Activated CD4-positive, alpha-beta T cell treated with anti-CD3 and anti-CD28 coated beads for 36 hours (primary cell): ENCODE measurements at regions of chr17 and their contacts with region 1.

Region 1: DNA sequence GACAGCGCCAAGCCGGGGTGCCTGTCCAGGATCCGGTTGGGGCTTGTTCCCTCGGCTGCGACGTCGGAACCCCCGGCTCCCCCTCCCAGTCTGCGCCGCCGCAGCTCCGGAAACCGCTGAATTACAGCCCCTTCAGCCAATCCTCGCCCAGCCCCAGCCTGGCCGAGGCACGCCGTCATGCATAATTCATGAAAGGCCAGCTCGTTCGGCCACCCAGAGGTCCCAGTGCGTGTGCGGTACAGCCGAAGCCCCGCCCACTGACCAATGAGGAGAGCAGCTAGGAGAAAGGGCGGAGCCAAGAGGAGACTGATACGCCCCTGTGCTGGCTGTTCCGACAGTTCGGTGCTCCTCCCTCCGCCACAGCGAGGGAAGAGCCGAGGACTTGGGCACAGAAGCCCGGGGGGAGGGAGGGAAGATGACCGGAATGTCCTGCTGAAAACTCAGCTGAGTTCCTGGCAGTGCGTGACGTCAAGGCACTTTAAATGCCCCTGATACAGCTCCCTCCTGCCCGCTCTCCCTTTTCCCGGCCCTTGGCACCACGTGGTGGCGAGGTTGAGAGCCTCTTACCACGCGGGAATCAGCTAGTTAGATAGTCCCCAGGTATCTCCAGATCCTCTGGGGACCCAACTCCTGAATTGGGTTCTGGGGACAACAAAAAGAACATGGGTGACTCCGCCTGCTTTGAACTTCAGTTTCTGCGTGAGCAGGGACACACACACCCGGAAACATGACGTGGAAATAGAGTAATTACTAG is at the start of gene STAT3:
- DNase-seq: peak; percentile 100
- ATAC-seq: peak; percentile 88
- H3K4me3 Mint-ChIP-seq: peak within 1 kb of the TSS; percentile 95
- H3K27ac Mint-ChIP-seq: peak within 1 kb of the TSS; percentile 100
- H3K4me1 Mint-ChIP-seq: peaks cover 57% of the 10 kb centered on the region
- H3K27me3 Mint-ChIP-seq: no peaks in the 10 kb centered on the region
- total RNA-seq, gene STAT3: 332 to 345 TPM

Region 2: GRCh38 chr17:42153919-42154742 is 234.4 kb before region 1 on chr17:
- CTCF ChIA-PET with region 1: no interaction called
- POLR2A ChIA-PET with region 1: no interaction called
- intact Hi-C with region 1: loop called in 1 of 2 experiments (anchors 1 kb)
- DNase-seq: no peak
- ATAC-seq: no peak
- H3K4me3 Mint-ChIP-seq: peak overlapping the region; percentile 97
- H3K27ac Mint-ChIP-seq: peak overlapping the region; percentile 93
- H3K4me1 Mint-ChIP-seq: peaks cover 31% of the 10 kb centered on the region
- H3K27me3 Mint-ChIP-seq: no peaks in the 10 kb centered on the region

Region 3: GRCh38 chr17:42287926-42288802 is 100.4 kb before region 1 on chr17 and contains the start of gene STAT5A:
- CTCF ChIA-PET with region 1: interaction called, 4 read pairs
- POLR2A ChIA-PET with region 1: interaction called, 5 read pairs
- intact Hi-C with region 1: loop called in 1 of 2 experiments (anchors 1 kb)
- DNase-seq: peak; percentile 90
- ATAC-seq: peak; percentile 65
- H3K4me3 Mint-ChIP-seq: peak within 1 kb of the TSS; percentile 81
- H3K27ac Mint-ChIP-seq: peak within 1 kb of the TSS; percentile 96
- H3K4me1 Mint-ChIP-seq: peaks cover 63% of the 10 kb centered on the region
- H3K27me3 Mint-ChIP-seq: no peaks in the 10 kb centered on the region
- total RNA-seq, gene STAT5A: 178 to 203 TPM

Region 4: GRCh38 chr17:42337442-42337841 is 51.1 kb before region 1 on chr17:
- CTCF ChIA-PET with region 1: interaction called, 25 read pairs
- POLR2A ChIA-PET with region 1: interaction called, 38 read pairs
- intact Hi-C with region 1: loop called (anchors 1 kb)
- DNase-seq: peak; percentile 93
- ATAC-seq: peak; percentile 60
- H3K4me3 Mint-ChIP-seq: peak overlapping the region; percentile 53
- H3K27ac Mint-ChIP-seq: peak overlapping the region; percentile 94
- H3K4me1 Mint-ChIP-seq: peaks cover 86% of the 10 kb centered on the region
- H3K27me3 Mint-ChIP-seq: no peaks in the 10 kb centered on the region

Region 5: DNA sequence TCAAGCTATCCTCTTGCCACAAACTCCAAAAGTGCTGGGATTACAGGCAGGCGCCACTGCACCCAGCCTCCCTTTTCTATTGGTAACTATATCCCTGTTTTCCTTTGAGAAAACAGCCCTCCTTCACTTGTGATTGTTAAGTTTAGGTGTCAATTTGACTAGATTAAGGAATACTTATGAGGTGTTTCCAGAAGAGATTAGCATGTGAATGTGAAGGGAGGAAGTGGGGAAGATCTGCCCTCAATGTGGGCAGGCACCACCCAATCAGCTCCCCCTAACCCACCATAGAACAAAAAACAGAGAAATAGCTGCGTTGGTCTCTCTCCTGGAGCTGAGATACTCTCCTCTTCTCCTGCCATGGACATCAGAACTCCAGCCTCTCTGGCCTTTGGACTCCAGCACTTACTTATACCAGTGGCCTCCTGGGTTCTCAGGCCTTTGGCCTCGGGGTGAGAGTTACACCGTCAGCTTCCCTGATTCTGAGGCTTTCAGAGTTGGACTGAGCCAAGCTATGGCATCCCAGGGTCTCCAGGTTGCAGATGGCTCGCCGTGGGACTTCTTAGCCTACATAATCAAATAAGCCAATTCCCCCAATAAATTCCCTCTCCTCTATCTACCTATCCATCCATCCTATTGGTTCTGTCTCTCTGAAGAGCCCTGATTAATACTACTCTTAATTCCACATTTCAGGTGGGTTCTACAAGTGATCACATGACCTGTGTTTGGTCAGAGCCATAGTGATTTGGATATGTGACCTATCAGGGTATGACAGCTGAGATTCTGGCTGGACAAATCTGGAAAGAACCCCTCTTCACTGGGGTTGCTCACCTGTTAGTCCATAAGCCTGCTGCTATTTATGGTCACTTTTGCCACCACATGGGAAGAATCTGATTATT is 11.6 kb after region 1 on chr17:
- CTCF ChIA-PET with region 1: interaction called, 36 read pairs
- POLR2A ChIA-PET with region 1: interaction called, 9 read pairs
- intact Hi-C with region 1: no loop called
- DNase-seq: no peak
- ATAC-seq: no peak
- H3K4me3 Mint-ChIP-seq: no peak overlapping the region
- H3K27ac Mint-ChIP-seq: peak overlapping the region; percentile 2
- H3K4me1 Mint-ChIP-seq: peaks cover 16% of the 10 kb centered on the region
- H3K27me3 Mint-ChIP-seq: peaks cover 2% of the 10 kb centered on the region

Region 6: GRCh38 chr17:42677008-42677857 is 288.7 kb after region 1 on chr17:
- CTCF ChIA-PET with region 1: no interaction called
- POLR2A ChIA-PET with region 1: no interaction called
- intact Hi-C with region 1: loop called in 1 of 2 experiments (anchors 2 kb)
- DNase-seq: peak; percentile 100
- ATAC-seq: peak; percentile 84
- H3K4me3 Mint-ChIP-seq: peak overlapping the region; percentile 70
- H3K27ac Mint-ChIP-seq: peak overlapping the region; percentile 69
- H3K4me1 Mint-ChIP-seq: peaks cover 49% of the 10 kb centered on the region
- H3K27me3 Mint-ChIP-seq: peaks cover 29% of the 10 kb centered on the region

Region 7: DNA sequence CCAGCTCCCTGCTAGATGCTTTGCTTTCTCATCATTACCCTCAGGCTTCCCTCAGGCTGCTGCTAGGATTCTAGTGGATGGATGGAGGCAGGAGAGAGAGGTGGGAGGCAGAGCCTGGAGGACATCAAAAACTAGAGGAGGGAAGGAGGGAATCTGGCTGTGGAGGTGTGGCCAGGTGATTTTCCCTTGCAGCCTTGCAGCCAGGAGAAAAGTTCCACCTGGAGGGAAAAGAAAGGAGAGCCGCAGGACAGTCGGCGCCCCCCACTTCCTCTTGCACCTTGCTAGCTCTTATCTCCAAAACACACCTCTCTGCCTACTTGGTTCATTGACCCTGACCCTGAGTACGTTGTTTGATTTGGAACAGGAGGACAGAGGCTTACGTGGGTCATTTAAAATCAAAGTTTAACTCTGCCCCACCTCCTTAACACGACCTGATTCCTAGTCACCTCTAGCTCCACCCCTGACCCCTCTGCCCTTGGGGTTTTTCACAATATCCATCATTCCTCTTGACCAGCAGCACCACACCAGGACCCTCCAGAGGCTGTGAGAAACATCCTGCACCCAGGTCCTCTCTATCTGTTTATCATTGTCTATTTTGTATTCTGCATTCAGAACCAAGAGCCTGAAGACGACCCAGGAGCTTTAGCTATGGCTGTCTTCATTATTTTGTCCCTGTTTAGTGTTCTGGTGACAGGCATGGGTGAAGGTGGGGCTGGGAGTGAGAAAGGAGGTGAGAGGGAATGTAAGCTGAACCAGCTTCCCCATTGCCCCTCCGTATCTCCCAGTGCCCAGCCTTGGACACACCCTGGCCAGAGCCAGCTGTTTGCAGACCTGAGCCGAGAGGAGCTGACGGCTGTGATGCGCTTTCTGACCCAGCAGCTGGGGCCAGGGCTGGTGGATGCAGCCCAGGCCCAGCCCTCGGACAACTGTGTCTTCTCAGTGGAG is 478.3 kb after region 1 on chr17:
- CTCF ChIA-PET with region 1: no interaction called
- POLR2A ChIA-PET with region 1: no interaction called
- intact Hi-C with region 1: no loop called
- DNase-seq: no peak
- ATAC-seq: no peak
- H3K4me3 Mint-ChIP-seq: no peak overlapping the region
- H3K27ac Mint-ChIP-seq: no peak overlapping the region
- H3K4me1 Mint-ChIP-seq: no peaks in the 10 kb centered on the region
- H3K27me3 Mint-ChIP-seq: peaks cover 5% of the 10 kb centered on the region